ENCODE measurements at regions of chr15 and their contacts with region 1.

Region 1: GRCh38 chr15:70100474-70101341 is 3.0 kb upstream of the TLE3 start:
- DNase-seq: peak; percentile 70
- ATAC-seq: peak; percentile 5

Region 2: GRCh38 chr15:70264014-70264582 is 163.4 kb after region 1 on chr15:
- intact Hi-C with region 1: loop called (anchors 10 kb)
- DNase-seq: no peak
- ATAC-seq: peak; percentile 50

Measured in Right ventricle myocardium superior (tissue), 1 donor.